PC-9 (cell line): ENCODE measurements at regions of chr6 and their contacts with region 1.

Region 1: DNA sequence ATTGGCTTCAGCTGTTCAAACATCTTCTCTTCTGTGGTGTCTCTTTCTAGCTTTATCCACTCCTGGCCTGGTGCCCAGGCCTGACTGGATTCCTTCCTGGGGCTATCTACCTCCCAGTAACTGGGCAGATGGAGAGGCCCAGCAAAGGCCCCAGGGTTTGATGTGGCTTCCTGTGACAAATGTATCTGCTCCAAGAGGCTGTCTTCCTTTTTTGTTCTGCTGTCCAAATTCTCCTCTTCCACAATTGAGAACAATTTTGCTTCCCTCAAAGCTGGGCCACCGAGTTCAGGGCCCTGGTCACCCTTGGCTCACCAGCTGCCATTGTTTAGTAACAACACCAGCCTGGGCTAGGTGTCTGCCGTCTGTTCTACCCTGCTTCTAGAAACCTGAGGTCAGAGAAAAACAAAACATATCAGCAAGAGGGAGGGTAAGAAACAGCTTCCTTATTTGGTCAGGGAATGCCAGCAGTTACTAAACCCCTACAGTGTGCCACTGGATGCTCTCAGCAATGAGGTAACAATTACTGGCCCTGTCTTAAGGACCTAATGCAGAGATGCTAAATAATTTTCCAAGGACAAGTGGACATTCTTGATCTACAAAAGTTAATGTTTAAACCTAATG is 3.9 kb downstream of the ZFP57 start:
- DNase-seq: peak; percentile 63 to 64
- H3K4me3 ChIP-seq: no peak overlapping the region
- H3K27ac ChIP-seq: peak overlapping the region; percentile 57
- H3K4me1 ChIP-seq: peaks cover 28% of the 10 kb centered on the region
- H3K27me3 ChIP-seq: no peaks in the 10 kb centered on the region
- CTCF ChIP-seq: no peak

Region 2: GRCh38 chr6:29171736-29172135 is 505.4 kb before region 1 on chr6:
- CTCF ChIA-PET with region 1: no interaction called
- POLR2A ChIA-PET with region 1: no interaction called
- intact Hi-C with region 1: no loop called
- DNase-seq: no peak
- H3K4me3 ChIP-seq: no peak overlapping the region
- H3K27ac ChIP-seq: no peak overlapping the region
- H3K4me1 ChIP-seq: no peaks in the 10 kb centered on the region
- H3K27me3 ChIP-seq: peaks cover 20% of the 10 kb centered on the region; the same call in 1 of the 2 replicates
- CTCF ChIP-seq: no peak

Region 3: DNA sequence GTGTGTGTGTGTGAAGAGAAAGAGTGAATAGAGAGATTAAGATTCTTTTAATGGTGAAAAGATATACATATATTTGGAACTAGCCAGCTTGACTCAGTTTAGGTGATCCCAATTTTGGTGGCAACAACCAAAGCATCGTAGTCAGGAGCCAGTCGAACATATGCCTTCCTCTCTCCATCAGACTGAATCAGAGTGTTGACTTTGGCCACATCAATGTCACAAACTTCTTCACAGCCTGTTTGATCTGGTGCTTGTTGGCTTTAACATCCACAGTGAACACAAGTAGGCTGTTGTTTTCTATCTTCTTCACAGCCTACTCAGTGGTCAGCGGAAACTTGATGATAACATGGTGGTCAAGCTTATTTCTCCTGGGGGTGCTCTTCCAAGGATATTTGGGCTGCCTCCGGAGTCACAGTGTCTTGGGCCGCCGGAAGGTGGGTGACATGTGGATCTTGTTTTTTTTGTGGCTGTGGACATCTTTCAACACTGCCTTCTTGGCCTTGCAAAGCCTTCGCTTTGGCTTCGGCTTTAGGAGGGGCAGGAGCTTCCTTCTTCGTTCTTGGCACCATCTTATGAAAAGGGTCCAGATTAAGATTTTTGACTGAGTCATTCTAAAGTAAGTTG is 49.6 kb after region 1 on chr6:
- CTCF ChIA-PET with region 1: no interaction called
- POLR2A ChIA-PET with region 1: interaction called, 13 read pairs
- intact Hi-C with region 1: no loop called
- DNase-seq: peak in 1 of 2 experiments; percentile 21
- H3K4me3 ChIP-seq: no peak overlapping the region
- H3K27ac ChIP-seq: no peak overlapping the region
- H3K4me1 ChIP-seq: no peaks in the 10 kb centered on the region
- H3K27me3 ChIP-seq: no peaks in the 10 kb centered on the region
- CTCF ChIP-seq: no peak